ENCODE measurements at regions of chr5 and their contacts with region 1.

Region 1: DNA sequence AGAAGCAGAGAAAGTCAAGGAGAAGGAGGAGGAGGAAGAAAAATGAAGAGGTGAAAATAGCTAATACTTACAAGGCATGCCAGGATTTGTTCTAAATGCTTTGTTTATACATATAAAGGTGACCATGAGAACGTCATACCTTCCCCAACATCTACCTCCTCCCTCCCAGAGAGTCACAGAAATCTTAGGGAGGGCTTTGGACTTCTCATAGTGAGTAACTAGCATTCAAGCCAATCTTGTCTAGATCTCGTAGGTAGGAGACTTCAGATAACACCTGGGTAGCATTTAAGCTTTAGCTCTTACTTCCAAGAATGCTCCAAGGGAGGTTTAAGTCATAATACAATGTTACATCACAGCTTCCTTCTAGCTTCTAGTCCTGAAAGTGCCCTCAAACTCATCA is 36.5 kb upstream of the GPBP1 start:
- DNase-seq: no peak
- ATAC-seq: no peak
- H3K4me3 ChIP-seq: no peak overlapping the region
- H3K27ac ChIP-seq: no peak overlapping the region
- H3K4me1 ChIP-seq: no peaks in the 10 kb centered on the region; a peak in 1 of 4 replicates
- H3K27me3 ChIP-seq: no peaks in the 10 kb centered on the region
- CTCF ChIP-seq: no peak
- POLR2A ChIP-seq: no peak
- RAD21 ChIP-seq: no peak

Region 2: GRCh38 chr5:56270568-56271392 is 866.6 kb before region 1 on chr5:
- CTCF ChIA-PET with region 1: interaction called, 8 read pairs
- POLR2A ChIA-PET with region 1: no interaction called
- RAD21 ChIA-PET with region 1: interaction called in 1 of 2 experiments, 3 read pairs
- intact Hi-C with region 1: loop called (anchors 5 kb)
- DNase-seq: peak; percentile 62
- ATAC-seq: peak; percentile 99
- H3K4me3 ChIP-seq: no peak overlapping the region
- H3K27ac ChIP-seq: no peak overlapping the region
- H3K4me1 ChIP-seq: no peaks in the 10 kb centered on the region
- H3K27me3 ChIP-seq: no peaks in the 10 kb centered on the region
- CTCF ChIP-seq: peak; percentile 82 to 99 (median 96)
- POLR2A ChIP-seq: no peak
- RAD21 ChIP-seq: peak; percentile 96

Region 3: DNA sequence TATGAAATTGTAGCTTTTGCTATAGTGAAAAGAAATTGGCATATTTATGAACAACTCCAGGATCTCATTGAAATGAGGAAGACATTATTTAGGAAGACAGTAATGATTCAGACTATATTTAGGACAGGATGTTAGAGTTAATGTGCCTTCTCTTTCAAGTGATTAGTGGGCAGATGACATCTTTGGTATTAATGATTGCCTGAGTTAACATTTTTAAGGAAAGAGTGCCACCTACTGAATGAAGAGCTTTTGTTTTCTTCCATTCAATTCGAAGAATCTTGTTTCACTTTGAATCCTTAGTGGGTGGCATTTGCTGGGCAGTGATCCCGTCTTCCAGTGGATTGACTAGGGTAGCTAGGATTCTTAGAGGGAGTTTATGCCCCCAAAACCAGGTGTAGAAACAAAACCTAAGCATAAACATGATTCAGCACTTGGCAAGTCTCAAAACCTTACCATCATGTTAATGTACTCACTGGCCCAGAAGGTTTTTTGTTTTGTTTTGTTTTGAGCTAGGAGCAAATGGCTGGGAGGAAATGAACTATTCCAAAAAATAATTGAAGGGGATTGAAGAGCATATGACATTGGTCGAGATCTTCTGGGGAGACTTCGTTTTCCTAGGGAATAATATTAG is 298.9 kb before region 1 on chr5:
- CTCF ChIA-PET with region 1: interaction called, 11 read pairs
- POLR2A ChIA-PET with region 1: interaction called, 3 read pairs
- RAD21 ChIA-PET with region 1: interaction called in 1 of 2 experiments, 3 read pairs
- intact Hi-C with region 1: no loop called
- DNase-seq: no peak
- ATAC-seq: peak; percentile 60; the same call in 1 of the 2 replicates
- H3K4me3 ChIP-seq: no peak overlapping the region
- H3K27ac ChIP-seq: no peak overlapping the region
- H3K4me1 ChIP-seq: peaks cover 2 to 5% of the 10 kb centered on the region in 2 experiments; a peak in 2 of 4 replicates
- H3K27me3 ChIP-seq: no peaks in the 10 kb centered on the region
- CTCF ChIP-seq: peak in 2 of 3 experiments; percentile 60 to 65; a peak in 3 of 6 replicates
- POLR2A ChIP-seq: no peak
- RAD21 ChIP-seq: peak; percentile 85

Region 4: GRCh38 chr5:56909294-56910209 is 227.8 kb before region 1 on chr5 and contains the start of gene SETD9:
- CTCF ChIA-PET with region 1: interaction called, 15 read pairs
- POLR2A ChIA-PET with region 1: interaction called, 17 read pairs
- RAD21 ChIA-PET with region 1: interaction called in 1 of 2 experiments, 14 read pairs
- intact Hi-C with region 1: no loop called
- DNase-seq: peak; percentile 88
- ATAC-seq: peak; percentile 91
- H3K4me3 ChIP-seq: peak within 1 kb of the TSS; percentile 64
- H3K27ac ChIP-seq: peak within 1 kb of the TSS; percentile 77
- H3K4me1 ChIP-seq: peaks cover 2 to 25% of the 10 kb centered on the region in 2 experiments; a peak in 3 of 4 replicates
- H3K27me3 ChIP-seq: no peaks in the 10 kb centered on the region
- CTCF ChIP-seq: no peak
- POLR2A ChIP-seq: peak; percentile 95
- RAD21 ChIP-seq: no peak
- total RNA-seq, gene SETD9: 10.9 TPM

Region 5: DNA sequence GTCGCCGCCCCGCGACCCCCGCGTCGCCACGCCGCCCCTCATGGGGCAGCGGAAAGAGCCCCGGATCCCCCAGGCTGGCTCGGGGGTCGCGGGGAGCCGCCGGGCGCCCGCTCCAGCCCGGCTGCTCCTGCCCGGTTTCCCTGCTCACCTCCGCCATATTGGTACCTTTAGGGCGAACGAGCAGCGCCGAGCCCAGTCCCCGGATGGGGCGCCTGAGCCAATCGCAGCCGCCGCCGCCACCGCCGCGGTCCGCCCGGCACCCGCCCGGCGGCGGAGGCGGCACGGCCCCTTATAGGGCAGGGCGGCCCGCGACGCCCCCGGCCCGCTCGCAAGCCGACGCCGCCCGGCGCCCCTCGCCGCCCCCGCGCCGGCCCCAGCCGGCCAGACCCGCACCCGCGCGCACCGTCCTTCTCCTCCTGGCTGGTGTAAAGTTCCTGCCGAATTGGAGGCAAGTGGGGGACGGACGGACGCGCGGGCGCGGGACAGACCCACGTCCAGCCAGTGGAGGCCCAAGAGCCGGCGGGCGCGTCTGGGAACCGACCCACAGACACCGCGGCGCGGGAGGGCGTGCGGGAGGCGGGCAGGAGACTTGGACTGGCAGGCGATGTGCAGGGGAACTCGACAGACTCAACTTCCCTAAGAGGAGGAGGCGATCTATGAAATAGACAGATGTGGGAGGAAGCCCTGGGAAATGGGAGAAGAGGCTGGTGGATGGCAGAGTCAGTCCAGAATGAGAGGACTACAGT is 185.3 kb before region 1 on chr5 and contains the start of gene MIER3:
- CTCF ChIA-PET with region 1: interaction called, 10 read pairs
- POLR2A ChIA-PET with region 1: no interaction called
- RAD21 ChIA-PET with region 1: interaction called in 1 of 2 experiments, 3 read pairs
- intact Hi-C with region 1: no loop called
- DNase-seq: peak; percentile 32
- ATAC-seq: peak; percentile 92
- H3K4me3 ChIP-seq: peak within 1 kb of the TSS; percentile 72 to 84
- H3K27ac ChIP-seq: peak within 1 kb of the TSS; percentile 73
- H3K4me1 ChIP-seq: peaks cover 8 to 15% of the 10 kb centered on the region in 2 experiments; a peak in 3 of 4 replicates
- H3K27me3 ChIP-seq: no peaks in the 10 kb centered on the region
- CTCF ChIP-seq: no peak
- POLR2A ChIP-seq: peak; percentile 20
- RAD21 ChIP-seq: no peak
- total RNA-seq, gene MIER3: 21.9 TPM

Region 6: GRCh38 chr5:57221049-57221568 is 83.7 kb after region 1 on chr5:
- CTCF ChIA-PET with region 1: interaction called, 15 read pairs
- POLR2A ChIA-PET with region 1: interaction called, 3 read pairs
- RAD21 ChIA-PET with region 1: no interaction called
- intact Hi-C with region 1: loop called (anchors 1 kb)
- DNase-seq: peak; percentile 35
- ATAC-seq: peak; percentile 74
- H3K4me3 ChIP-seq: no peak overlapping the region
- H3K27ac ChIP-seq: peak overlapping the region; percentile 37; the same call in 1 of the 2 replicates
- H3K4me1 ChIP-seq: peaks cover 14 to 25% of the 10 kb centered on the region in 2 experiments
- H3K27me3 ChIP-seq: no peaks in the 10 kb centered on the region
- CTCF ChIP-seq: peak; percentile 43 to 89 (median 69); a peak in 5 of 6 replicates
- POLR2A ChIP-seq: no peak
- RAD21 ChIP-seq: peak; percentile 78

Region 7: GRCh38 chr5:57267805-57268204 is 130.4 kb after region 1 on chr5:
- CTCF ChIA-PET with region 1: no interaction called
- POLR2A ChIA-PET with region 1: no interaction called
- RAD21 ChIA-PET with region 1: no interaction called
- intact Hi-C with region 1: no loop called
- DNase-seq: no peak
- ATAC-seq: no peak
- H3K4me3 ChIP-seq: no peak overlapping the region
- H3K27ac ChIP-seq: no peak overlapping the region
- H3K4me1 ChIP-seq: no peaks in the 10 kb centered on the region
- H3K27me3 ChIP-seq: no peaks in the 10 kb centered on the region
- CTCF ChIP-seq: no peak
- POLR2A ChIP-seq: no peak
- RAD21 ChIP-seq: no peak

Measured in HCT116 (cell line).